GM12878 (cell line): ENCODE measurements at regions of chr11 and their contacts with region 1.

Region 1: DNA sequence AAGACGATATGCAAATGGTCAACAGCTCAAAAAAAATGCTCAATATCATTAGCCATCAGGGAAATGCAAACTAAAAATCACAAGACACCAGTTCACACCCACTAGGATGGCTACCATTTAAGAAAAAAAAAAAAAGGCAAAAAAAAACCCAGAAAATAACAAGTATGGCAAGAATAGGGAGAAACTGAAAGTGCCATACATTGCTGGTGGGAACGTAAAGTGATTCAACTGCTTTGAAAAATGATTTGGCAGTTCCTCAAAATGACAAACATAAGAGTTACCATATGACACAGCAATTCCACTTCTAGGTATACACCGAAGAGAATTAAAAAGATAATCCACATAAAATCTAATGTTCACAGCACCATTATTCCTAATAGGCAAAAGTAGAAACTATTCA is 47.5 kb downstream of the PICALM start:
- DNase-seq: peak; percentile 55
- ATAC-seq: peak; percentile 90
- H3K4me3 ChIP-seq: no peak overlapping the region
- H3K27ac ChIP-seq: no peak overlapping the region
- H3K4me1 ChIP-seq: peaks cover 2% of the 10 kb centered on the region; the same call in 1 of the 2 replicates
- H3K27me3 ChIP-seq: no peaks in the 10 kb centered on the region
- CTCF ChIP-seq: no peak
- EP300 ChIP-seq: peak in 1 of 2 experiments; percentile 43; a peak in 1 of 4 replicates
- POLR2A ChIP-seq: no peak
- RAD21 ChIP-seq: no peak

Region 2: DNA sequence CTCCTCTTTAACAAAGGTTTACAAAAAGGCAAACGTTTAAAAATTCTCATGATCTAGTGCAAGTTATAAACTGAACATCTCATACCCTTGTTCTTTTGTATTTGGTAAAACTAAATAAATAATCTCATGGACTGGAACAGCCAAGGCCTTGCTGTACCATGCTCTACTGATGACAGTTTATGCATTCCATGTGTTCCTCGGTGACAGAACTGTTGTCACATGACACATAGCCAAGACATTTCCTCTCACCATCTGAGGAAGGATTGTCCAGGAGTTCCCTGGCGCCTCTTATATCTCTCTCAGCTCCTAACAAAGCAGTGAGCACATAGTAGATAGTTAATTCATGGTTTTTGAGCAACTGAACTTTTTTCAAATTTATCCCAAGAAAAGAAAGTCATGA is 153.6 kb before region 1 on chr11:
- CTCF ChIA-PET with region 1: no interaction called
- POLR2A ChIA-PET with region 1: no interaction called
- RAD21 ChIA-PET with region 1: no interaction called
- SMC1A ChIA-PET with region 1: no interaction called
- in situ Hi-C with region 1: no loop called
- intact Hi-C with region 1: no loop called
- DNase-seq: no peak
- ATAC-seq: no peak
- H3K4me3 ChIP-seq: no peak overlapping the region
- H3K27ac ChIP-seq: no peak overlapping the region
- H3K4me1 ChIP-seq: no peaks in the 10 kb centered on the region
- H3K27me3 ChIP-seq: no peaks in the 10 kb centered on the region; a peak in 2 of 4 replicates
- CTCF ChIP-seq: no peak
- EP300 ChIP-seq: no peak
- POLR2A ChIP-seq: no peak
- RAD21 ChIP-seq: no peak

Region 3: GRCh38 chr11:86035164-86035563 is 13.8 kb after region 1 on chr11:
- CTCF ChIA-PET with region 1: interaction called, 11 read pairs
- POLR2A ChIA-PET with region 1: interaction called, 3 read pairs
- RAD21 ChIA-PET with region 1: interaction called, 3 read pairs
- SMC1A ChIA-PET with region 1: interaction called, 14 read pairs
- in situ Hi-C with region 1: no loop called
- intact Hi-C with region 1: no loop called
- DNase-seq: no peak
- ATAC-seq: peak; percentile 18
- H3K4me3 ChIP-seq: no peak overlapping the region
- H3K27ac ChIP-seq: no peak overlapping the region
- H3K4me1 ChIP-seq: peaks cover 2% of the 10 kb centered on the region
- H3K27me3 ChIP-seq: no peaks in the 10 kb centered on the region
- CTCF ChIP-seq: no peak
- EP300 ChIP-seq: no peak
- POLR2A ChIP-seq: no peak
- RAD21 ChIP-seq: no peak